ENCODE measurements at regions of chr6 and their contacts with region 1.

Region 1: DNA sequence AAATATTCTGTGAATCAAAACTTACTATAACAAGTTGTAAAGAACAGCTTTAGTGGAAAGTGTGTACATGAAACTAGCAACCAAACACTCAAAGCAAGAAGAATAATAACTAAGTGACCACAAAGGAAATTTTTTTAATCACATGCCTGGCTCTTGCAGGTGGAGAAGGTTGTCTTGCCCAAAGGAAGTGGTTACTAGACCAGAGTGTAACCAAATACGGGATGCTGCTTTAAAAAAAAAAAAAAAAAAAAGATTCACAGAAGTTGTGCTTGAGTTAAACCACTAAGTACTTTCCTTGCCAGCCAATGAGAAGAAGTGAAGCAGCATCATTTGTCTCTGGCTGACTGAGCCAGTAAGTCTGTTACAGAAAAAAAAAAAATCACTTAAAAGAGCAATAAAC is 19.1 kb upstream of the HLA-DQB1 start:
- DNase-seq: peak; percentile 78 to 89 (median 81)
- H3K4me3 ChIP-seq: no peak overlapping the region
- H3K4me3 Mint-ChIP-seq: peak overlapping the region in 7 of 8 donors; percentile 22 to 83 (median 59)
- H3K27ac ChIP-seq: peak overlapping the region; percentile 20
- H3K27ac Mint-ChIP-seq: peak overlapping the region; percentile 25 to 89 (median 86)
- H3K4me1 ChIP-seq: peaks cover 31% of the 10 kb centered on the region
- H3K4me1 Mint-ChIP-seq: peaks cover 18 to 37% (median 29%) of the 10 kb centered on the region in 4 donors
- H3K27me3 ChIP-seq: no peaks in the 10 kb centered on the region
- H3K27me3 Mint-ChIP-seq: peaks cover 0 to 3% of the 10 kb centered on the region in 2 donors

Region 2: GRCh38 chr6:32666420-32667300 is 18.9 kb before region 1 on chr6 and contains the start of gene HLA-DQB1:
- CTCF ChIA-PET with region 1: interaction called, 4 read pairs
- POLR2A ChIA-PET with region 1: interaction called, 4 read pairs
- intact Hi-C with region 1: loop called (anchors 2 kb)
- DNase-seq: peak; percentile 9 to 75 (median 67)
- H3K4me3 ChIP-seq: peak within 1 kb of the TSS; percentile 42 to 48
- H3K4me3 Mint-ChIP-seq: peak within 1 kb of the TSS; percentile 74 to 92 (median 88)
- H3K27ac ChIP-seq: peak within 1 kb of the TSS; percentile 67
- H3K27ac Mint-ChIP-seq: peak within 1 kb of the TSS; percentile 43 to 96 (median 93)
- H3K4me1 ChIP-seq: peaks cover 30% of the 10 kb centered on the region
- H3K4me1 Mint-ChIP-seq: peaks cover 28 to 63% (median 49%) of the 10 kb centered on the region in 4 donors
- H3K27me3 ChIP-seq: no peaks in the 10 kb centered on the region
- H3K27me3 Mint-ChIP-seq: peaks cover 9 to 14% of the 10 kb centered on the region in 2 donors
- total RNA-seq, gene HLA-DQB1: 6.3 to 9.9 TPM

Region 3: DNA sequence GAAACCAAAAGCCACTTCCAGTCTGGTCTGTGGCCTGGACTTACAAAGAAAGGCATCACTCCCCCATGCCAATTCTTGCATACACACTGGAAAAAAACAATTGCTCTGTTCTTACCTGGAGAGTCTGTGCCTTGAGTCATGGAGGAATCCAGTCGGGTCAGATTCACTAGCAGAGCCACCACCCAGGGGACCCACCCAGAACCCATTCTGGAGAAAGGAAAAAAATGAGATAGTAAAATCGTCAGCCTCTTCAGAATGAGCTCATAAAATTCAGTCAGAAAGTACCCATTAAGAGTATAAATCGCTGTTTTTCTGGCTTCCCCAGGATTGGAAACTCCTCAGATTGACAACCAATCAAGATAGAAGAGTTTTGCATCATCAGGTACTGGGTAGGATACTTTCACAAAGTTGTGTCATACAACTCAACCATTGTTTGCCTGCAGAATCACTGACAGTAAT is 131.2 kb after region 1 on chr6 and contains the start of gene HLA-DOB:
- CTCF ChIA-PET with region 1: no interaction called
- POLR2A ChIA-PET with region 1: no interaction called
- intact Hi-C with region 1: no loop called
- DNase-seq: peak in 2 of 5 donors; percentile 32 to 33
- H3K4me3 ChIP-seq: no peak within 1 kb of the TSS
- H3K4me3 Mint-ChIP-seq: no peak within 1 kb of the TSS
- H3K27ac ChIP-seq: no peak within 1 kb of the TSS
- H3K27ac Mint-ChIP-seq: no peak within 1 kb of the TSS
- H3K4me1 ChIP-seq: no peaks in the 10 kb centered on the region
- H3K4me1 Mint-ChIP-seq: no peaks in the 10 kb centered on the region
- H3K27me3 ChIP-seq: no peaks in the 10 kb centered on the region
- H3K27me3 Mint-ChIP-seq: no peaks in the 10 kb centered on the region
- total RNA-seq, gene HLA-DOB: 0.61 to 1.1 TPM

Measured in CD4-positive, alpha-beta memory T cell (primary cell).